Aorta (tissue), 5 donors: ENCODE measurements at regions of chr6 and their contacts with region 1.

Region 1: GRCh38 chr6:19845266-19846041 is 8.3 kb downstream of the ID4 start:
- DNase-seq: no peak
- ATAC-seq: no peak
- H3K4me3 ChIP-seq: no peak overlapping the region
- H3K27ac ChIP-seq: peak overlapping the region; percentile 53 to 98
- H3K4me1 ChIP-seq: peaks cover 12 to 14% of the 10 kb centered on the region in 2 donors
- H3K27me3 ChIP-seq: no peaks in the 10 kb centered on the region

Region 2: DNA sequence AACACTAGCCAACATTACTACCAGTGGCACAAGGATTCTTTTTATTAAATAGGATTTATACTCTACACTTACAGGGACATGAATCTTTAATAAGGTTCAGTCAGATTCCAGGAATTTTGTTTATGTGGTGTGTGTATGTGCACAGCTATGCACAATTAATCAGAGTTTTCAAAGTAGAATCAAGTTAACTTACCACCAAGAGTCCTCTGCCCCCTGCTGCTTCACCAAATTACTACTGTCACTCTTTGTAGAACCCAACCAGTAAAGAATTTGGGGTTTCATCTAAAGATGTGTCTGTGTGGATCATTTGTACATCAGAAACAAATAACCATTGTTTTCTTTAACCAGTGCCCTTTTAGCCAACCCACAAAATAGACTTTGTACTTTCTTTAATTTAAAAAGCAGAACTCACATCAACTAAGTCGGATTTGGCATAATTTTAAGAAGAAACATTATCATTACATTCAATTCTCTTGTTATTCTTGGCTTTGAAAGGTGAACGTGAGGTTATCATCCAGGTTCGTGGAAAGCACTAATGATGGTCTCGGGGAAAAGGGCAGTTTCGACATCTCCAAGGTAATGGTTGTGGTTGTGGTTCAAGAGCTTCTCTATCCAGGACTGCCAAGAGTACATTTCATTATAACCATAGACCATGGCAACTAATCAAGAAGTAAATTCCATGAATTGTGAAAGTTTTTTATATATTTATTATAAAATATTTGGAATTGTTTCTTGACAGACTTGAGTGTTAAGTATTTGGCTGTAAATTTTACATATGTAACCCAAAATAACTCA is 522.6 kb before region 1 on chr6:
- intact Hi-C with region 1: loop called in 1 of 2 experiments (anchors 10 kb)
- DNase-seq: no peak
- ATAC-seq: no peak
- H3K4me3 ChIP-seq: no peak overlapping the region
- H3K27ac ChIP-seq: no peak overlapping the region
- H3K4me1 ChIP-seq: peaks cover 3 to 22% of the 10 kb centered on the region in 2 donors
- H3K27me3 ChIP-seq: no peaks in the 10 kb centered on the region

Region 3: GRCh38 chr6:19538077-19538512 is 307.4 kb before region 1 on chr6:
- intact Hi-C with region 1: loop called in 1 of 2 experiments (anchors 10 kb)
- DNase-seq: peak in 1 of 2 donors; percentile 56
- ATAC-seq: no peak
- H3K4me3 ChIP-seq: no peak overlapping the region
- H3K27ac ChIP-seq: no peak overlapping the region
- H3K4me1 ChIP-seq: peaks cover 0 to 3% of the 10 kb centered on the region in 2 donors
- H3K27me3 ChIP-seq: no peaks in the 10 kb centered on the region

Region 4: GRCh38 chr6:19719691-19720128 is 125.7 kb before region 1 on chr6:
- intact Hi-C with region 1: loop called in 1 of 2 experiments (anchors 10 kb)
- DNase-seq: no peak
- ATAC-seq: no peak
- H3K4me3 ChIP-seq: no peak overlapping the region
- H3K27ac ChIP-seq: peak overlapping the region; percentile 24 to 55
- H3K4me1 ChIP-seq: peaks cover 0 to 8% of the 10 kb centered on the region in 2 donors
- H3K27me3 ChIP-seq: no peaks in the 10 kb centered on the region

Region 5: DNA sequence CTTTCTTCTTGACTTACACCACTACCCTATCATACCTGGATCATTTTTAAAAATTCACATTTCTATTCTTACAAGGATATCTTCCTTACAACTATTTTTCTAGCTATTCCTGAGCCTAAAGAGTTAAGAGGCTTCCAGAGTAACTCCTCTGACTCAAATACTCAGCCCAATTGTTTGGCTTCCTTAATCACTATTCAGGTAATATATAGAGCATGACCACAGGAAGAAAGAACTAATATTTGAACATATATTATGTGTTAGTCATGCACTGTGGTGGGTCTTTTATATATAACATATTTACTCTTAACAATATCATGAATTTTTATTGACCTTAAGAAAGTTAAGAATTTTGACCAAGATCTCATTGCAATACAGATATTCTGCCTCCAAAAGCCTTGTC is 50.2 kb before region 1 on chr6:
- intact Hi-C with region 1: no loop called
- DNase-seq: no peak
- ATAC-seq: no peak
- H3K4me3 ChIP-seq: no peak overlapping the region
- H3K27ac ChIP-seq: no peak overlapping the region
- H3K4me1 ChIP-seq: peaks cover 0 to 1% of the 10 kb centered on the region in 2 donors
- H3K27me3 ChIP-seq: no peaks in the 10 kb centered on the region

Region 6: DNA sequence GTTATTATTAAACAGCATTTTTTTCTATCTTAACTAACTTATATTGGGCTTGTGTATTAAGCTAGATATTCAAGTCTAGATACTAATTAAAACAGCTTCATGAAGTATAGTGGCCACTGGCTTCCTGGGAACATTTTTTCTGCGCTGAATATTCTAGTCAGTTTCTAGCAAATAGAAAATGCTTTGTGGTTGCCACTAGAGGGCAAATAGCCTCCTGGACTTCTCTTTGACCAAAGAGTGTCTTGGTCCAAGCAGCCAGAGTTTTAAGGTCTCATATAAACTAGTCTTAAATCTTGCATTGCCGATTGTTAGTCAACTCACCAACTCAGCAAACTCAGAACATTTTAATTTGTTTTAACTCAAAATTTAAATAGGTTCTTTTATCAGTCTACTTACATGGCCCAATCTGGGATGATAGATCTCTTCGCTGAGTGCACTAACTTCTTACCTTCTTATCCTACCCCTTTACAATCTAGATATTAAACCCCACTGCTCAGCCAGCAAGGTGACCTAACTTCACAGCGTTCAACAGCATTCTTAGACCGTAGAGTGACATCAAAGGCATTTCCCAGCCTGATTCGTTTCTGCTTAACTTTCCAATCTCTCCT is 32.8 kb before region 1 on chr6:
- intact Hi-C with region 1: loop called in 1 of 2 experiments (anchors 5 kb)
- DNase-seq: no peak
- ATAC-seq: peak; percentile 56
- H3K4me3 ChIP-seq: no peak overlapping the region
- H3K27ac ChIP-seq: no peak overlapping the region
- H3K4me1 ChIP-seq: peaks cover 0 to 2% of the 10 kb centered on the region in 2 donors
- H3K27me3 ChIP-seq: no peaks in the 10 kb centered on the region